ENCODE measurements at regions of chr17 and their contacts with region 1.

Region 1: GRCh38 chr17:66466840-66467367 is 164.5 kb downstream of the PRKCA start:
- DNase-seq: peak; percentile 87
- H3K4me3 Mint-ChIP-seq: peak overlapping the region; percentile 45
- H3K27ac Mint-ChIP-seq: peak overlapping the region; percentile 90
- H3K4me1 Mint-ChIP-seq: peaks cover 75% of the 10 kb centered on the region
- H3K27me3 Mint-ChIP-seq: no peaks in the 10 kb centered on the region

Region 2: DNA sequence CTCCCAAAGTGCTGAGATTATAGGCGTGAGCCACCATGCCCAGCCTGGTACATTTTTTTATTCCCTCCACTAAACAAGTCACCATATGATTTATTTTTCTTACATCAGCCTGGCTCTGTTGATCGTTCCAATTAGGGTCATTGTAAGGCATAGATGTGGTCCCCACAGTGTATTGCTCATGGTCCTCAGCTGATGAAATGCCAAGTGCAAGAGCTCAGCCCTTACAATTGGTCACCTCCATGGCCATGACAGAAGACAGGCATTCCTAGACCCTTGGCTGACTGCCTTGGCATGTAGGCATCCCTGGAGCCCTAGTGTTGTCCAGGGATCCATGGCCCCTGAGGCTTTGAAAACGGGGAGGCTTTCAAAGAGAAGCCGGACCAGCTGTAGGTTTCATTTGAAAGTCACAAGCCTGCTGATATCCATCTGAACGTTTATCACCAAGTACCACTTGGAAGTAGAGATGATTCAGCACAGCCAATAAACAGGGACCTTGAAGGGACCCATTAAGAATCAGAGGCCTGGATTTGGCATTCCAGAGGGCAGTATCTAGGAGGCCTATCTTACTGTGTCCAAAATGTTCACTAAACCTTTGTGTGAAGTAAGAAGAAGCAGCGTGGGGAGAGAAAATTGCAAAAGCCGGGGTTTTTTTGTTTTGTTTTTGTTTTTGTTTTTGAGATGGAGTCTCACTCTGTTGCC is 185.1 kb before region 1 on chr17:
- CTCF ChIA-PET with region 1: no interaction called
- intact Hi-C with region 1: no loop called
- DNase-seq: no peak
- H3K4me3 Mint-ChIP-seq: no peak overlapping the region
- H3K27ac Mint-ChIP-seq: no peak overlapping the region
- H3K4me1 Mint-ChIP-seq: peaks cover 19% of the 10 kb centered on the region
- H3K27me3 Mint-ChIP-seq: no peaks in the 10 kb centered on the region

Region 3: GRCh38 chr17:66310528-66311148 is 156.3 kb before region 1 on chr17:
- CTCF ChIA-PET with region 1: interaction called, 5 read pairs
- intact Hi-C with region 1: loop called (anchors 1 kb)
- DNase-seq: peak; percentile 77
- H3K4me3 Mint-ChIP-seq: peak overlapping the region; percentile 25
- H3K27ac Mint-ChIP-seq: peak overlapping the region; percentile 94
- H3K4me1 Mint-ChIP-seq: peaks cover 90% of the 10 kb centered on the region
- H3K27me3 Mint-ChIP-seq: no peaks in the 10 kb centered on the region

Region 4: GRCh38 chr17:66415366-66416206 is 51.3 kb before region 1 on chr17:
- CTCF ChIA-PET with region 1: no interaction called
- intact Hi-C with region 1: no loop called
- DNase-seq: no peak
- H3K4me3 Mint-ChIP-seq: no peak overlapping the region
- H3K27ac Mint-ChIP-seq: no peak overlapping the region
- H3K4me1 Mint-ChIP-seq: peaks cover 77% of the 10 kb centered on the region
- H3K27me3 Mint-ChIP-seq: no peaks in the 10 kb centered on the region

Region 5: GRCh38 chr17:66426397-66427033 is 40.4 kb before region 1 on chr17:
- CTCF ChIA-PET with region 1: interaction called, 3 read pairs
- intact Hi-C with region 1: loop called (anchors 1 kb)
- DNase-seq: peak; percentile 68
- H3K4me3 Mint-ChIP-seq: no peak overlapping the region
- H3K27ac Mint-ChIP-seq: peak overlapping the region; percentile 83
- H3K4me1 Mint-ChIP-seq: peaks cover 81% of the 10 kb centered on the region
- H3K27me3 Mint-ChIP-seq: no peaks in the 10 kb centered on the region

Region 6: GRCh38 chr17:66518677-66519076 is 51.8 kb after region 1 on chr17:
- CTCF ChIA-PET with region 1: no interaction called
- intact Hi-C with region 1: no loop called
- DNase-seq: no peak
- H3K4me3 Mint-ChIP-seq: no peak overlapping the region
- H3K27ac Mint-ChIP-seq: no peak overlapping the region
- H3K4me1 Mint-ChIP-seq: peaks cover 79% of the 10 kb centered on the region
- H3K27me3 Mint-ChIP-seq: no peaks in the 10 kb centered on the region

Region 7: GRCh38 chr17:66547117-66547865 is 80.4 kb after region 1 on chr17:
- CTCF ChIA-PET with region 1: interaction called, 3 read pairs
- intact Hi-C with region 1: loop called (anchors 1 kb)
- DNase-seq: no peak
- H3K4me3 Mint-ChIP-seq: no peak overlapping the region
- H3K27ac Mint-ChIP-seq: peak overlapping the region; percentile 46
- H3K4me1 Mint-ChIP-seq: peaks cover 53% of the 10 kb centered on the region
- H3K27me3 Mint-ChIP-seq: no peaks in the 10 kb centered on the region

Region 8: DNA sequence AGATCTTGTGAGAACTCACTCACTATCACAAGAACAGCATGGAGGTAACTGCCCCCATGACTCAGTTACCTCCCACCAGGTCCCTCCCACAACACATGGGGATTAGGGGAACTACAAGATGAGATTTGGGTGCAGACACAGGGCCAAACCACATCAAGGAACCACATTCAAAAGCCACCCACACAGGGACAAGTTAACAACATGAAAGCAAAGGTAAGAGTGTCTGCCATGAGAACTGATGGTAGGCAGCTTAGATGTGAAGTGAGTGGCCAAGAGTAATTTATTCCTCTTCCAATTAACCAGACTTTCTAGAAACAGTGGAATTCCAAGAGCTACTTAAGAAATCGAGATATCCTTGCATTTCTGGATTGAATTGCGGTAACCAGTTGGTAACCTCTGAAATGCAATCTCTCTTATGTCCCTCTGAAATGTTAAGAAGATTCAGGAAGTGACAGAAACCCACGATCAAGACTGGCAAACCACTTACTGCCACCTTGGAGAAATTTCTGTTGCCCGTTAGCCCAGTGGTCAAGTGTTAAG is 200.7 kb after region 1 on chr17:
- CTCF ChIA-PET with region 1: no interaction called
- intact Hi-C with region 1: loop called (anchors 1 kb)
- DNase-seq: peak; percentile 89
- H3K4me3 Mint-ChIP-seq: no peak overlapping the region
- H3K27ac Mint-ChIP-seq: no peak overlapping the region
- H3K4me1 Mint-ChIP-seq: peaks cover 78% of the 10 kb centered on the region
- H3K27me3 Mint-ChIP-seq: no peaks in the 10 kb centered on the region

Measured in activated naive CD4-positive, alpha-beta T cell treated with anti-CD3 and anti-CD28 coated beads for 36 hours (primary cell).